ENCODE measurements at regions of chr4 and their contacts with region 1.

Region 1: DNA sequence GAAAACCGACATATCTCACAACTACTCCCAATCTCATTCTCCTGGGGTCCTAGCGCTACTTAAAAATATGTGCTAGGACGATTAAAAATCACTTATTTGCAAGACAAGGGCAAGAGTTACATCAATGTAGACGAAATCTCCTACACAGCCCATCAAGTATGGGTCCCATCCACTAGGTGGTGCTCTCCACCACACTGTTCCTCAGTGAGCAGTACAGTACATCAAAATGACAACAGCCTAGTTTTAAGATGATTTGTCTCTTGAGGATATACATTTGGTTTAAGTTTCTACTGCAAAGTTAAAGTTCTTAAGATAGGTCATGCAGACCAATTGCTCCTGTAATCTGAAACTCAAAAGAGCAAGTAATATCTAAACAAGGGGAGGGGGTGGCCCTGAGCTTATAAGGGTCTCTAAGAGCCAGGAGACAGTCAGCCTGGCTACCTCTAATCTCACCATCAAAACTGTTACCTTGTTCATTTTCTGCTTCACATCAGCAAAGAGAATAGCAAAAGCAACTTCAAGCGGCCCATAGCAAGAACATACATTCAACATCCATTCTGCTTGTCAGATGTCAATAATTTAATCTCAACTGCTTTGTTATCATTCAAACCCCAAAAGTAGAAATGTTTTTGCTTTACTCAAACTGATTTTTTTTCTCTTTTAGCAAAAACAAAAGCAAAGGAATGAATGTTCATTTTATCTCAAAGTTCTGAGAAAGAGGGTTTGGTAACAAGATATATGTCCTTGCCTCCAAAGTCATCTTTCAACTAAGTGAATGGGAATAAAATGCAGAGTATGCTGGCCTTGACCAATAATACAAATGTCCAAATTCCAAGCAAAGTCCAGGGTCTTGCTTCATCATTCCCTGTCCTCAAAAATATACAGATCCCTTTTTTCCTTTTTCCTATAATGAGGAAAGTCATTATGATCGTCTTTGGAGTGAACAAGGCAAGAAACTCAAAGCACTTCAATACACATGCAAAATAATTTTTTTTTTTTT is 53.1 kb downstream of the STX18 start:
- DNase-seq: peak; percentile 49 to 81 (median 73)
- ATAC-seq: peak; percentile 92
- H3K4me3 ChIP-seq: no peak overlapping the region
- H3K4me3 Mint-ChIP-seq: no peak overlapping the region
- H3K27ac ChIP-seq: no peak overlapping the region
- H3K27ac Mint-ChIP-seq: no peak overlapping the region
- H3K4me1 ChIP-seq: no peaks in the 10 kb centered on the region
- H3K4me1 Mint-ChIP-seq: peaks cover 7% of the 10 kb centered on the region
- H3K27me3 ChIP-seq: no peaks in the 10 kb centered on the region
- H3K27me3 Mint-ChIP-seq: no peaks in the 10 kb centered on the region
- CTCF ChIP-seq: peak; percentile 90

Region 2: GRCh38 chr4:4575273-4576211 is 86.8 kb after region 1 on chr4:
- CTCF ChIA-PET with region 1: interaction called, 3 read pairs
- POLR2A ChIA-PET with region 1: no interaction called
- intact Hi-C with region 1: loop called in 1 of 2 experiments (anchors 5 kb)
- DNase-seq: peak; percentile 18 to 82 (median 63)
- ATAC-seq: peak; percentile 88
- H3K4me3 ChIP-seq: peak overlapping the region; percentile 51 to 63
- H3K4me3 Mint-ChIP-seq: peak overlapping the region; percentile 61
- H3K27ac ChIP-seq: peak overlapping the region in 1 of 2 experiments; percentile 31
- H3K27ac Mint-ChIP-seq: peak overlapping the region; percentile 66
- H3K4me1 ChIP-seq: no peaks in the 10 kb centered on the region
- H3K4me1 Mint-ChIP-seq: peaks cover 14% of the 10 kb centered on the region
- H3K27me3 ChIP-seq: no peaks in the 10 kb centered on the region
- H3K27me3 Mint-ChIP-seq: no peaks in the 10 kb centered on the region
- CTCF ChIP-seq: peak; percentile 30

Region 3: GRCh38 chr4:4880492-4880891 is 391.8 kb after region 1 on chr4:
- CTCF ChIA-PET with region 1: no interaction called
- POLR2A ChIA-PET with region 1: no interaction called
- intact Hi-C with region 1: loop called (anchors 5 kb)
- DNase-seq: no peak
- ATAC-seq: no peak
- H3K4me3 ChIP-seq: no peak overlapping the region
- H3K4me3 Mint-ChIP-seq: no peak overlapping the region
- H3K27ac ChIP-seq: no peak overlapping the region
- H3K27ac Mint-ChIP-seq: no peak overlapping the region
- H3K4me1 ChIP-seq: no peaks in the 10 kb centered on the region
- H3K4me1 Mint-ChIP-seq: no peaks in the 10 kb centered on the region
- H3K27me3 ChIP-seq: peaks cover 0 to 5% of the 10 kb centered on the region in 2 experiments
- H3K27me3 Mint-ChIP-seq: peaks cover 29% of the 10 kb centered on the region
- CTCF ChIP-seq: no peak

Region 4: GRCh38 chr4:4995103-4995907 is 506.6 kb after region 1 on chr4:
- CTCF ChIA-PET with region 1: no interaction called
- POLR2A ChIA-PET with region 1: no interaction called
- intact Hi-C with region 1: loop called in 1 of 2 experiments (anchors 2 kb)
- DNase-seq: peak in 7 of 9 experiments; percentile 9 to 56 (median 38)
- ATAC-seq: no peak
- H3K4me3 ChIP-seq: no peak overlapping the region
- H3K4me3 Mint-ChIP-seq: no peak overlapping the region
- H3K27ac ChIP-seq: no peak overlapping the region
- H3K27ac Mint-ChIP-seq: no peak overlapping the region
- H3K4me1 ChIP-seq: no peaks in the 10 kb centered on the region
- H3K4me1 Mint-ChIP-seq: no peaks in the 10 kb centered on the region
- H3K27me3 ChIP-seq: no peaks in the 10 kb centered on the region
- H3K27me3 Mint-ChIP-seq: peaks cover 9% of the 10 kb centered on the region
- CTCF ChIP-seq: peak; percentile 53

Region 5: DNA sequence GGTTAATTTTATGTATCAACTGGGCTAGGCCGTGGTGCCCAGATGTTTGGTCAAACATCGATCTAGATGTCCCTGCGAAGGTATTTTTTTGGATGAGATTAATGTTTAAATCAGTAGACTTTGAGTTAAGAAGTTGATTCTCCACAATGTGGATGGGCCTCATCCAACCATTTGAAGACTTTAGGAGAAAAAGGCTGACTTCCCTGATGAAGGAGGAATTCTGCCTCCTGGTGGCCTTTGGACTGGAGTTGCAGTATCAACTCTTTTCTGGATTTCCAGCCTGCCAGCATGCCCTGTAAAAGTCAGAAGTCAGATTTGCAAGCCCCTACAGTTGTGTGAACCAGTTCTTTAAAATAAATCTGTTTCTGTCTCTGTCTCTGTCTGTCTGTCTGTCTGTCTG is 654.0 kb after region 1 on chr4:
- CTCF ChIA-PET with region 1: no interaction called
- POLR2A ChIA-PET with region 1: no interaction called
- intact Hi-C with region 1: loop called (anchors 5 to 10 kb)
- DNase-seq: peak in 2 of 9 experiments; percentile 9 to 18
- ATAC-seq: no peak
- H3K4me3 ChIP-seq: no peak overlapping the region
- H3K4me3 Mint-ChIP-seq: no peak overlapping the region
- H3K27ac ChIP-seq: no peak overlapping the region
- H3K27ac Mint-ChIP-seq: no peak overlapping the region
- H3K4me1 ChIP-seq: no peaks in the 10 kb centered on the region
- H3K4me1 Mint-ChIP-seq: no peaks in the 10 kb centered on the region
- H3K27me3 ChIP-seq: no peaks in the 10 kb centered on the region
- H3K27me3 Mint-ChIP-seq: peaks cover 2% of the 10 kb centered on the region
- CTCF ChIP-seq: no peak

Region 6: DNA sequence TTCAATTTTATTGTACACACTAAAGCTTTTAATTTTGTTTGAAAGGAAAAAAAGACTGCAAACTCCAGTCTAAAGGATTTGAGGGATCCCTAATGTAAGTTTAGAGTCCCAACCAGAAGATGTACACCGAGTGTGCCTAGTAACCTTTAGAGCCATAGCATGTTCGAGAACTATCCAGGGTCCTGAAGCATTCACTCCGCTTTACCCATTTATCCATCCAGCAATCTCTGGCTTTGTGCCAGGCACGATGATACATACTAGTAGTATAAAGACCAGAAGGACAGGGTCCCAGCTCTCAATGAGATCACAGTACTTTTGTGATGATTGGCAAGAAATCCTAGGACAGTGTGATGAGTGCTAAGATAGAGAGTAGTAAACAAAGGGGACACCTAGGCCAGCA is 731.3 kb after region 1 on chr4:
- CTCF ChIA-PET with region 1: no interaction called
- POLR2A ChIA-PET with region 1: no interaction called
- intact Hi-C with region 1: no loop called
- DNase-seq: no peak
- ATAC-seq: no peak
- H3K4me3 ChIP-seq: no peak overlapping the region
- H3K4me3 Mint-ChIP-seq: no peak overlapping the region
- H3K27ac ChIP-seq: no peak overlapping the region
- H3K27ac Mint-ChIP-seq: no peak overlapping the region
- H3K4me1 ChIP-seq: no peaks in the 10 kb centered on the region
- H3K4me1 Mint-ChIP-seq: no peaks in the 10 kb centered on the region
- H3K27me3 ChIP-seq: no peaks in the 10 kb centered on the region
- H3K27me3 Mint-ChIP-seq: no peaks in the 10 kb centered on the region
- CTCF ChIP-seq: no peak

Region 7: DNA sequence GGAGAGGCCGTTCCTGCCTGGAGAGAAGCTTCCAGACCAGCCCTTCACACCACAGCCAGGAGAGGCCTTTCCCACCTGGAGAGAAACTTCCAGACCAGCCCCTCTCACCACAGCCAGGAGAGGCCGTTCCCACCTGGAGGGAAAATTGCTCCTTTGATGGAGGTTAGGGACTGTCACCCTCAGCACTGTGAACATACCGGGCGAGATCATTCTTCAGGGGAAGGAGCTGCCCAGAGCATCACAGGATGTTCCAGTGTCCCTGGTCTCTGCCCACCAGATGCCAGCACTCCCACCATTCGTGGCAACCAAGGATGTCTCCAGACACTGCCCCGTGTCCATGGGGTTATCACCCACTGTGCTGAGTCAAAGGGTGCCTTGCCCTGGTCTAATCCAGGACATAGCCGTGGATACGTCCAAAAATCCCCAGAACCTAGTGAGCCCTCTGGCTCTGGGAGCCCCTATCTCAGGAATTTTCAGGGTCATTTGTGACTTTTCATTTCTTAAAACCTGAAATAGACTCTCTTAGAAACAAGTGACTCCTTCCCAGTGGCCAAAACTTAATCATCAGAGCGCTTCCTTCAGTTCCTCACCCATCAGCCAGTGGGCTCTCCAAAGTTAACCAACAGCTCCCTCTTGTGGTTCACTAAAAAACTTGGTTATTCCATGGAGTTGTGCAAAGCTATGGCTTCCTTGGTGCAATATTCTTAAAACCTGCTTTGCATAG is 1324.0 kb after region 1 on chr4:
- CTCF ChIA-PET with region 1: no interaction called
- POLR2A ChIA-PET with region 1: no interaction called
- intact Hi-C with region 1: loop called in 1 of 2 experiments (anchors 1 kb)
- DNase-seq: peak in 2 of 9 experiments; percentile 35 to 55
- ATAC-seq: no peak
- H3K4me3 ChIP-seq: no peak overlapping the region
- H3K4me3 Mint-ChIP-seq: no peak overlapping the region
- H3K27ac ChIP-seq: no peak overlapping the region
- H3K27ac Mint-ChIP-seq: no peak overlapping the region
- H3K4me1 ChIP-seq: no peaks in the 10 kb centered on the region
- H3K4me1 Mint-ChIP-seq: no peaks in the 10 kb centered on the region
- H3K27me3 ChIP-seq: no peaks in the 10 kb centered on the region
- H3K27me3 Mint-ChIP-seq: no peaks in the 10 kb centered on the region
- CTCF ChIP-seq: no peak

Region 8: DNA sequence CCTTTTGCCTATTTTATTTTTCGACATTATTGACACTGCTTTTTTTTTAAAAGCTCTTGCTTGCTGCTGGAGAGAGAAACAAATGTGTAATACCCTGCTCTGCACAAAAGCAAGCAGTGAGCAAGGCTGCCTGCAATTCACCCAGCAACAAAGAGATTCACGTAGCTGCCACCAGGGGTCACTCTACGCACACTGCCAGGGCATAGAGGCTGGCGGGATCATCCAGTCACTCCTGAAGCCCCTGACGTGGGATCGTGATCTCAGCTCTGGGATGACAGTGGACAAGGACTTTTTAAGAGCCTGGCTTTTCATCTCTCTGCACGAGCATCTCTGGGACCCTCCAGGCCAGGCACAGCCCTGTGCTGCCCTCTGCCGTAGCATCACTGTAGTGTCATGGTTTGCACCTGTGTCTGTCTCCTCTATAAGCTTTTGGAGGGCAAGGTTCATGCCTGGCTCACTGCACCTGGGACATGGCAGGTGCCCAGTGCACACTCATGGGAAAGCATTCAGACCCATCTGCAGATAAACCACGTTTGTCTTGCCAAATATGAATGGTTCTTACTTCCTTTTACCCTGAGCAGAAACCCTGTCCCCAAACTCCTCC is 1509.7 kb after region 1 on chr4:
- CTCF ChIA-PET with region 1: no interaction called
- POLR2A ChIA-PET with region 1: no interaction called
- intact Hi-C with region 1: loop called in 1 of 2 experiments (anchors 5 kb)
- DNase-seq: peak in 7 of 9 experiments; percentile 19 to 65 (median 39)
- ATAC-seq: peak; percentile 36
- H3K4me3 ChIP-seq: no peak overlapping the region
- H3K4me3 Mint-ChIP-seq: no peak overlapping the region
- H3K27ac ChIP-seq: no peak overlapping the region
- H3K27ac Mint-ChIP-seq: no peak overlapping the region
- H3K4me1 ChIP-seq: no peaks in the 10 kb centered on the region
- H3K4me1 Mint-ChIP-seq: no peaks in the 10 kb centered on the region
- H3K27me3 ChIP-seq: peaks cover 0 to 3% of the 10 kb centered on the region in 2 experiments
- H3K27me3 Mint-ChIP-seq: peaks cover 21% of the 10 kb centered on the region
- CTCF ChIP-seq: peak; percentile 69

Measured in CD8-positive, alpha-beta T cell (primary cell).